Activated naive CD4-positive, alpha-beta T cell treated with anti-CD3 and anti-CD28 coated beads for 36 hours (primary cell): ENCODE measurements at regions of chr1 and their contacts with region 1.

Region 1: GRCh38 chr1:223712194-223712849 is at the start of gene CAPN2:
- DNase-seq: peak; percentile 65
- H3K4me3 Mint-ChIP-seq: peak within 1 kb of the TSS; percentile 75
- H3K27ac Mint-ChIP-seq: peak within 1 kb of the TSS; percentile 41
- H3K4me1 Mint-ChIP-seq: peaks cover 52% of the 10 kb centered on the region
- H3K27me3 Mint-ChIP-seq: no peaks in the 10 kb centered on the region
- total RNA-seq, gene CAPN2: 17.0 to 19.5 TPM

Region 2: DNA sequence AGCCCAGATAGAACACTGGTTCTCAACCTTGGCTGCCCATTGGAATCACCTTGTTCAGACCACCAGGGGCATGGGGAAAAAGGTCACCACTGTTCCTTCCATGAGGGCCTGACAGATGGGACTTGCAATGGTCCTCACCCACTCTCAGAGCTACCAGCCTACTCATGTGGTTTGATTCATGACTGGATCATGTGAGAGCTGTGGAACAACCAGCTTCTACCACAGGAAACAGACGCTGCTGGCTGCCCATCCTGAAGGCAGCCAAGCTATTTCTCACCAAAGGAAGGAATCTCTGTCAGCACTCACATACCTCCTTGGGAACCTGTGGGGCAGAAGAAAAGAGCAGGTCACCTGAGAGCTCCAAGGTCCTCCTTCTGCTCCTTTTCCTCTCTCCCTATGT is 100.4 kb before region 1 on chr1:
- CTCF ChIA-PET with region 1: no interaction called
- intact Hi-C with region 1: no loop called
- DNase-seq: no peak
- H3K4me3 Mint-ChIP-seq: no peak overlapping the region
- H3K27ac Mint-ChIP-seq: no peak overlapping the region
- H3K4me1 Mint-ChIP-seq: no peaks in the 10 kb centered on the region
- H3K27me3 Mint-ChIP-seq: no peaks in the 10 kb centered on the region

Region 3: GRCh38 chr1:223695941-223696340 is 16.4 kb before region 1 on chr1:
- CTCF ChIA-PET with region 1: interaction called, 15 read pairs
- intact Hi-C with region 1: no loop called
- DNase-seq: no peak
- H3K4me3 Mint-ChIP-seq: no peak overlapping the region
- H3K27ac Mint-ChIP-seq: no peak overlapping the region
- H3K4me1 Mint-ChIP-seq: peaks cover 7% of the 10 kb centered on the region
- H3K27me3 Mint-ChIP-seq: no peaks in the 10 kb centered on the region

Region 4: GRCh38 chr1:223726380-223727001 is 14.2 kb after region 1 on chr1:
- CTCF ChIA-PET with region 1: interaction called, 3 read pairs
- intact Hi-C with region 1: loop called (anchors 2 kb)
- DNase-seq: peak; percentile 98
- H3K4me3 Mint-ChIP-seq: peak overlapping the region; percentile 52
- H3K27ac Mint-ChIP-seq: peak overlapping the region; percentile 65
- H3K4me1 Mint-ChIP-seq: peaks cover 57% of the 10 kb centered on the region
- H3K27me3 Mint-ChIP-seq: no peaks in the 10 kb centered on the region